Mammary epithelial cell (primary cell): ENCODE measurements at regions of chr5 and their contacts with region 1.

Region 1: GRCh38 chr5:54443270-54443669 is 12.2 kb upstream of the HSPB3 start:
- DNase-seq: peak; percentile 2
- H3K4me3 ChIP-seq: no peak overlapping the region
- H3K27ac ChIP-seq: no peak overlapping the region
- H3K4me1 ChIP-seq: peaks cover 18% of the 10 kb centered on the region
- H3K27me3 ChIP-seq: no peaks in the 10 kb centered on the region
- CTCF ChIP-seq: peak; percentile 3 to 35

Region 2: GRCh38 chr5:54159153-54159892 is 283.9 kb before region 1 on chr5:
- CTCF ChIA-PET with region 1: no interaction called
- dilution Hi-C with region 1: no loop called
- in situ Hi-C with region 1: no loop called
- intact Hi-C with region 1: no loop called
- DNase-seq: peak; percentile 10
- H3K4me3 ChIP-seq: no peak overlapping the region
- H3K27ac ChIP-seq: no peak overlapping the region
- H3K4me1 ChIP-seq: no peaks in the 10 kb centered on the region
- H3K27me3 ChIP-seq: no peaks in the 10 kb centered on the region
- CTCF ChIP-seq: peak; percentile 2 to 32

Region 3: DNA sequence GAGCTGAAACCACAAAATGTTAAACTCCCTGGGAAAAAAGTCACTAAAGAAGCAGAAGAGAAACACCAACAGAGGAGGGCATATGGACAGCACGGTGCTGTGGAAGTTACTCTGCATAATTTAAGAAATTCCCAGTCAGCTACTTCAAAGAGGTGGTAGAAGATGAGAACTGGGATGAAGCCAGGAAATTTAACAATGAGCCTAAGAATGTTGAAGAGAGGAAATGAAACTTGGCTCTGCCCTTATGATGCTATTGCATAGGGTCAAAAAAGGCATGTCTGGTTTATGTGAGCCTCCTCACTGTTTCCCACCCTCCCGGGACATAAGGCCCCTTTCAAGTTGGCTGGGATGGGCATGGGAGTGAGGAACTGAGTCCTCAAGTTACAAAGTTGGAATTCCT is 48.9 kb after region 1 on chr5:
- CTCF ChIA-PET with region 1: no interaction called
- dilution Hi-C with region 1: no loop called
- in situ Hi-C with region 1: no loop called
- intact Hi-C with region 1: loop called (anchors 1 kb)
- DNase-seq: peak; percentile 3
- H3K4me3 ChIP-seq: no peak overlapping the region
- H3K27ac ChIP-seq: no peak overlapping the region
- H3K4me1 ChIP-seq: no peaks in the 10 kb centered on the region
- H3K27me3 ChIP-seq: peaks cover 3% of the 10 kb centered on the region
- CTCF ChIP-seq: no peak